ENCODE measurements at regions of chr12 and their contacts with region 1.

Region 1: GRCh38 chr12:57111031-57111734 is at the start of gene STAT6:
- DNase-seq: peak; percentile 82
- H3K4me3 ChIP-seq: peak within 1 kb of the TSS; percentile 62 to 68 (median 67)
- H3K27ac ChIP-seq: peak within 1 kb of the TSS; percentile 95
- H3K4me1 ChIP-seq: peaks cover 31% of the 10 kb centered on the region
- H3K27me3 ChIP-seq: no peaks in the 10 kb centered on the region
- CTCF ChIP-seq: no peak
- total RNA-seq, gene STAT6: 65.3 to 150 TPM

Region 2: DNA sequence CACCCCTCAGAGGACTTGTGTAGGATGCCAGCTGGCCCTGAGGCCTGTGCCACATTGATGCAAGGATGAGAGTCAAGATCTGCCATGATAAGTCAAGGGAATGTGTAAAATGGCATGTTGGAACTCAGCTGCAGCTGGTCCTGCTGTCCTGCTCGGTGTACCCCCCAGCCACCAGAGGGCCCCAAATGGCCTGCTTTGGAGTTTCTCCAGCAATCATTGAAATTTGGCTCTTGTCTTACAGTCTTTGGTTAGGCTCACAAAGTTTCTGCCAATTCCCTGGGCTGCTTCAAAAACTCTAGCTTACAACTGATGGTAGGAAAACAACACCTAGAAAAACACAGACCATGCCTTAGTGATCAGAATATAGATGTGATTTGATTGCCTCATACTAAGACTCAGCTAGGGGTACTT is 271.3 kb before region 1 on chr12:
- CTCF ChIA-PET with region 1: no interaction called
- dilution Hi-C with region 1: no loop called
- in situ Hi-C with region 1: no loop called
- intact Hi-C with region 1: loop called (anchors 1 kb)
- DNase-seq: peak; percentile 56
- H3K4me3 ChIP-seq: no peak overlapping the region
- H3K27ac ChIP-seq: no peak overlapping the region
- H3K4me1 ChIP-seq: peaks cover 34% of the 10 kb centered on the region
- H3K27me3 ChIP-seq: no peaks in the 10 kb centered on the region
- CTCF ChIP-seq: peak; percentile 77 to 85

Region 3: GRCh38 chr12:57049890-57050289 is 61.3 kb before region 1 on chr12 and contains the start of gene MYO1A:
- CTCF ChIA-PET with region 1: no interaction called
- dilution Hi-C with region 1: no loop called
- in situ Hi-C with region 1: no loop called
- intact Hi-C with region 1: no loop called
- DNase-seq: no peak
- H3K4me3 ChIP-seq: no peak within 1 kb of the TSS
- H3K27ac ChIP-seq: no peak within 1 kb of the TSS
- H3K4me1 ChIP-seq: no peaks in the 10 kb centered on the region
- H3K27me3 ChIP-seq: no peaks in the 10 kb centered on the region
- CTCF ChIP-seq: no peak
- total RNA-seq, gene MYO1A: not detected

Region 4: DNA sequence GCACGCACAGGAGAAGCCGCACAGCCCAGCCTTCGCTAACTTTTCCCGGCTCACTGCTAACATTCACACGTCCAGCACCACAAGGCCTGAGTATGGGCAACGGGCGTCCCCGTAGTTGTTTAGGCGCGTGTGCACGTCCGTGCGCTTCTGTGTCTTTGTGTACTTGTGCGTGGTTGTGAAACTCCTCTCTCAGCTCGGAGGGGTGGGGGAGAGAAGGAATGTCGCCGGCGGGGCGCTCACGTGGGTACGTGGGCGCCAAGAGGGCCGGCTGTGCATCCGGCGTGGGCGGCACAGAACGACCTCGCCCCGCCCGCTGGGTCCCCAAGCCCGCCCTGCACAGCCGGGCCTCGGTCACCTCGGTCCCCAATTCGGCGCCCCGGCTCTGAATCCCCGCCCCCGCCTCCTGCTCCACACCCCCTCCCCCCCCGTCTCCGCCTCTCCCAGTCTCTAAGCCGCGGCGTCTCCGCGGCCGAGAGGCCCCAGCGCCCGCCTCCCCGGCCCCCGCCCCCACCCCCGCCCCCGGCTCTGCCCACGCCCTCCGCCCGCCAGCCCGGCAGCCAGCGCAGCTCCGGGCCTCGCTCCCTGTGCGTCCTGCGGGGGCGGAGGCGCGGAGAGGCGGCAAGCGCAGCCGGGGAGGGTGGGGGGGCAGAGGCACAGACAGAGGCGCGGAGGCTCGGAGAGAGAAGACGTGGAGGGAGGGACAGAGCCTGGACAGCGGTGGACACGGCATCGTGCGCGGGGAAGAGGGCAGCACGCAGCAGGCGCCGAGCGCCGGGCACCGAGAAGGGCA is 22.5 kb before region 1 on chr12 and contains the start of gene NAB2:
- CTCF ChIA-PET with region 1: interaction called, 4 read pairs
- dilution Hi-C with region 1: no loop called
- in situ Hi-C with region 1: no loop called
- intact Hi-C with region 1: loop called (anchors 1 kb)
- DNase-seq: peak; percentile 90
- H3K4me3 ChIP-seq: peak within 1 kb of the TSS; percentile 72 to 96 (median 88)
- H3K27ac ChIP-seq: peak within 1 kb of the TSS; percentile 97
- H3K4me1 ChIP-seq: peaks cover 60% of the 10 kb centered on the region
- H3K27me3 ChIP-seq: no peaks in the 10 kb centered on the region
- CTCF ChIP-seq: no peak
- total RNA-seq, gene NAB2: 33.8 to 35.3 TPM

Region 5: GRCh38 chr12:57175428-57176138 is 64.4 kb after region 1 on chr12:
- CTCF ChIA-PET with region 1: no interaction called
- dilution Hi-C with region 1: no loop called
- in situ Hi-C with region 1: loop called in 1 of 2 experiments (anchors 5 kb)
- intact Hi-C with region 1: loop called (anchors 1 kb)
- DNase-seq: peak; percentile 95
- H3K4me3 ChIP-seq: peak overlapping the region in 2 of 3 experiments; percentile 28 to 31
- H3K27ac ChIP-seq: peak overlapping the region; percentile 5
- H3K4me1 ChIP-seq: peaks cover 30% of the 10 kb centered on the region
- H3K27me3 ChIP-seq: no peaks in the 10 kb centered on the region
- CTCF ChIP-seq: peak; percentile 86 to 91

Region 6: DNA sequence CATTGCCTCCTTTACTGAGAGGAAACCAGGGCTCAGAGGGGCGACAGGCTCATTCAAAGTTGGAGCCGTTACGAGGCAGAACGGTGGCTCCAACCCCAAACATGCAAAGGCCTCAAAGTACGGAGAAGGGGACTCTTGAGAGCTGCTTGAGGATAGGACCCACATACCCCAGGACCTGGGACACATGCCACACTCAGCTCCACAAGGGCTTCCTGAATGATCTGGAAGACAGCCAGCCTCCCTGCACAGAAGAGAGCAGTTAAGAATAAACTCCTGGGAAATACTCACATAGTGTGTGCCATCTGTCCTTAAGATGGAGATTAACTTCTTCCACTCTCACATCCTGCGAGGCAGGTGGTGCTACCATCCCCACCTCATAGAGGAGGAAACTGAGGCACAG is 78.9 kb after region 1 on chr12:
- CTCF ChIA-PET with region 1: no interaction called
- dilution Hi-C with region 1: no loop called
- in situ Hi-C with region 1: no loop called
- intact Hi-C with region 1: no loop called
- DNase-seq: no peak
- H3K4me3 ChIP-seq: no peak overlapping the region
- H3K27ac ChIP-seq: no peak overlapping the region
- H3K4me1 ChIP-seq: peaks cover 16% of the 10 kb centered on the region
- H3K27me3 ChIP-seq: no peaks in the 10 kb centered on the region
- CTCF ChIP-seq: no peak

Region 7: DNA sequence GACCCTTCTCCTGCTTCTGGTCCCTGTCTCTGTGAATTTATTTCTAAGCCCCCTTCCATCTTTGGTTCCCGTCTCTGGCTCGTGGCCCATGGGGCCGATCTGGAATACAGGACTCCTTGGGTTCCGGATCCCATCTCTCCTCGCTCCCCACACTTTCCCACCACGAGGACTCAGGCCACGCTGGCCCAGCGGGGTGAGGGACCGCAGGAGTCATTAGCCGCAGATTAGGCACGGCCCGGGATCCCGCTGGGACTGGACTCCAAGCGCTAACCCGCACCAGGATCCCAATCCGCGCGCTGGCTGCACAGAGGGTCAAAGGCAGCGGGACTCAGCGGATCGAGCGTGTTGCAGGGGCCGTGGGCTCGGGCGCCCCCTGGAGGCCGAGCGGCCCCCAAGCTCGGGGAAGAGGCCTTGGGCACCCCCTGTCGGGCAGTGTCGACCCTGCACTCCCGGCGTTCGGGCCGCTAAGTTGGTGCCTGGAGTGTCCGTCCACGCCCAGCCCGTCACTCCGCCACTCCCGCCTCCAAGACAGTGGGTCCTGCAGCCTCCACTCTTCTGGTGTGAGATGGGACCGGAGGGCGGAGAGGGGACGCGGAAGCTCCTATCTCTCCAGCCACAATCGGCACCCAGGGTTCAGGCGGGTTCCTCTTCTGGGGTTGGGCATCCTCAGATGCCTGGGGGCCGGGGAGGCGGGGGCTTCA is 127.8 kb after region 1 on chr12:
- CTCF ChIA-PET with region 1: no interaction called
- dilution Hi-C with region 1: no loop called
- in situ Hi-C with region 1: no loop called
- intact Hi-C with region 1: loop called (anchors 5 kb)
- DNase-seq: peak; percentile 71
- H3K4me3 ChIP-seq: peak overlapping the region; percentile 62 to 66 (median 63)
- H3K27ac ChIP-seq: no peak overlapping the region
- H3K4me1 ChIP-seq: peaks cover 44% of the 10 kb centered on the region
- H3K27me3 ChIP-seq: peaks cover 4% of the 10 kb centered on the region
- CTCF ChIP-seq: peak; percentile 99 to 100

Region 8: GRCh38 chr12:57261428-57261865 is 150.3 kb after region 1 on chr12:
- CTCF ChIA-PET with region 1: no interaction called
- dilution Hi-C with region 1: no loop called
- in situ Hi-C with region 1: no loop called
- intact Hi-C with region 1: no loop called
- DNase-seq: no peak
- H3K4me3 ChIP-seq: no peak overlapping the region
- H3K27ac ChIP-seq: no peak overlapping the region
- H3K4me1 ChIP-seq: no peaks in the 10 kb centered on the region
- H3K27me3 ChIP-seq: no peaks in the 10 kb centered on the region
- CTCF ChIP-seq: no peak

Measured in mammary epithelial cell (primary cell).